Calu3 (cell line): ENCODE measurements at regions of chr1 and their contacts with region 1.

Region 1: GRCh38 chr1:201877877-201878401 is 10.8 kb upstream of the SHISA4 start:
- DNase-seq: peak; percentile 51
- H3K4me3 Mint-ChIP-seq: no peak overlapping the region
- H3K27ac Mint-ChIP-seq: no peak overlapping the region
- H3K4me1 Mint-ChIP-seq: no peaks in the 10 kb centered on the region
- H3K27me3 Mint-ChIP-seq: no peaks in the 10 kb centered on the region
- CTCF ChIP-seq: peak; percentile 41

Region 2: GRCh38 chr1:201970334-201971159 is 92.6 kb after region 1 on chr1:
- CTCF ChIA-PET with region 1: interaction called, 10 read pairs
- intact Hi-C with region 1: loop called (anchors 1 kb)
- DNase-seq: no peak
- H3K4me3 Mint-ChIP-seq: no peak overlapping the region
- H3K27ac Mint-ChIP-seq: peak overlapping the region; percentile 67
- H3K4me1 Mint-ChIP-seq: no peaks in the 10 kb centered on the region
- H3K27me3 Mint-ChIP-seq: no peaks in the 10 kb centered on the region
- CTCF ChIP-seq: no peak

Region 3: GRCh38 chr1:202135221-202135721 is 257.3 kb after region 1 on chr1:
- CTCF ChIA-PET with region 1: interaction called, 3 read pairs
- intact Hi-C with region 1: loop called (anchors 5 kb)
- DNase-seq: peak; percentile 62
- H3K4me3 Mint-ChIP-seq: no peak overlapping the region
- H3K27ac Mint-ChIP-seq: no peak overlapping the region
- H3K4me1 Mint-ChIP-seq: no peaks in the 10 kb centered on the region
- H3K27me3 Mint-ChIP-seq: no peaks in the 10 kb centered on the region
- CTCF ChIP-seq: peak; percentile 84